Common myeloid progenitor, CD34-positive (primary cell): ENCODE measurements at regions of chr15 and their contacts with region 1.

Region 1: DNA sequence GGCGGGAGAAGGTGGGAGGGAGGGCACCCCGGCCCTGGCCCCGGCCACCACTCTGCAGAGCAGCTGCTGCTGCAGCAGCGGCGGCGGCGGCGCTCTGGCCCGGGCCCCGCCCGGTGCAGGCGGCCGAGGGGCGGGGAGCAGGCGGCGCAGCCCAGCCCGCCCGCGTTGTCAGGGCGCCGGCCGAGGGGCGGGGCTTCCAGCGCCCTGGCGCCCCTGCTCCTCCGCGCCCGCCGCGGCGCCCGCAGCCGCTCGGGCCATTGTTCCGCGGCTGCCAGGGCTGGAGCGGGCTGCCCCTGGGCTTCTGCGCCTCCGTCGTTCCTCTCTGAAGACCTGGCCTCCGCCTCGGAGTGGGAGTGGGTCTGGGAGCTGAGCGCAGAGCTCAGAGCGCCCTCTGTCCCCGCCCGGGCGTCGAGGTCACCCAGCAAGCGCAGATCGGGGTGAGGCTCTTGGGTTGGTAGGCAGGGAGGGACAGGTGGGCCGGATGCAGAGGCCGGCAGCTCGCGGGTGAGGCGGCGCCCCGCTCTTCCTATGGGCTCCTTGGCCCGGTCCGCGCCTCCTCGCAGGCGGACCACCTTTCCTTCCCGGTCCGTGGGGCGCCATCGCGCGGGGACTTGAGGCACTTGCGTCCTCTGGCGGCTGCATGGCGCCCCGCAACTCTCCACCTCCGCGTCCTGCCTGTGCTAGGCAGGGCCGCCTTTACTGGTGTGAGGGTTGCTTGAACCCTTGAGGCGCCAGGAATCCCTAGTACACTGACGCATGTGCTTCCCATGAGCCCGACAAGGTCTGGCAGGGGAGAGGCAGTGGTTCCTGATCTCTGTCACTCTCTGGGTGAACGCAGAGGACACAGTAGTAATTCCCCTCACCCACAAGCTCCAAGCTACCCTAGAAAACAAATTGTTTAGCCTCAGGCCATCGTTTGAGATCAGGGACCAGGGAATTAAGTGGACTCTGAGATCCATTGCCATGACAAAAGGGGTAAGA is at the start of gene LPCAT4:
- DNase-seq: peak; percentile 89 to 94 (median 94)
- H3K4me3 ChIP-seq: peak within 1 kb of the TSS; percentile 87 to 98 (median 91)
- H3K27ac ChIP-seq: peak within 1 kb of the TSS; percentile 51 to 87
- H3K4me1 ChIP-seq: peaks cover 8 to 27% (median 20%) of the 10 kb centered on the region in 4 experiments
- H3K27me3 ChIP-seq: no peaks in the 10 kb centered on the region

Region 2: DNA sequence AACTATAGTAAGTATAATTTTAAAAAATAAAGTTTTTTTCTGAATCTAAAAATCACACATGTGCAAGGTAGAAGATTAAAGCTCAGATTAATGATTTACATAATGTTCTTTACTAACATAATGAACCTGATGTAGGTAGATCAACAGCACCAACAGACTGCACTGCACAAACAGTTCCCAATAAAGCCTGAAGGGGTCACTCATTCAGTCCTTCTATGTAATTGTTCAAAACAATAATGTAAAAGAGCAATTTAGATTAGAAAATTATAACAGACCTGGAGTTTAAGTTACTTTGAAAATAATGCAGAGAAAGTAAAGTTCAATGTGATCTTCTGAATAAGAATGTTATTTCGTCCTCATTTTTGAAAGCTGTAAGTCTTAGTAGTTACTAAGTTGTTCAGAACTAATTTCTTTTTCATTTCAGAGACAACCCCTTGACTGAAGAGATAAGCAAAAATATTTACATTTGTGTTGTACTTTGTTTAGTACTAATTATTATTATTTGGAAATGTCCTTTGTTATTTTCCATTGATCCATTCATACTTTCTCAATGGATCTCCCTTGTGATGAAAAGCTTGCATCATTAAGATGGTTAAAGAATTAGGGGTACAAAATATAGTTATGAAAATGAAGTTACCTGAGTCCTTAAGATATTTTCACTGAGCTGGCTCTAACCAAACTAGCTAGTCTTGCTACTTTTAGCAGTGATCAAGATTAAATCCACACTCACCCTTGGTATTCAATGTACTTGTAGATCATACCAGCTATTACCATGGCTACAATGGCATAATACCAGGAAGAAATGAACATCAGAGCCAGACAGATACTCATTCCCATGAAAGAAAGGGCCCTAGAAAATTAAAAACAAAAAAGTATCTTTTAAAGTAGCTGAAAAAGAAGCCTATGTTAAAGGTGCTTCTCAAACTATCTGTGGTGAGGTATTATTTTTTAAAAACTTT is 125.7 kb before region 1 on chr15:
- CTCF ChIA-PET with region 1: interaction called, 47 read pairs
- POLR2A ChIA-PET with region 1: interaction called, 3 read pairs
- DNase-seq: peak; percentile 66 to 84 (median 75)
- H3K4me3 ChIP-seq: no peak overlapping the region
- H3K27ac ChIP-seq: peak overlapping the region in 1 of 2 experiments; percentile 37
- H3K4me1 ChIP-seq: no peaks in the 10 kb centered on the region
- H3K27me3 ChIP-seq: no peaks in the 10 kb centered on the region

Region 3: DNA sequence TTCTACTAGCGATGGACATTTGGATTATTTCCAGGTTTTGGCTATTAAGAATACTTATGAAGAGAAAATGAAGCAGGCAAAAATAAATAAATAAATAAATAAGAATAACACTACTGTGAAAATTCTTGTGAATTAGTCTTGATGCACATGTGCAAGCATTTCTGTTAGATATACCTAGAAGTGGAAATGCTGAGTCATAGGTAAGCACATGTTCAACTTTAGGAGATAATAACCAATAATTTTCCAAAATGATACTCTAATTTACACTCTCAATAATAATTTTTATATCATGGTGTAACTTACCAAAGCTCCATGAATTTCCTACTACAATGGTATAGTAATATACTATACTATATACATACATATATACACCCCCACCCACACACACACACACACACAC is 119.2 kb before region 1 on chr15:
- CTCF ChIA-PET with region 1: interaction called, 47 read pairs
- POLR2A ChIA-PET with region 1: no interaction called
- DNase-seq: peak in 2 of 3 donors; percentile 22 to 33
- H3K4me3 ChIP-seq: no peak overlapping the region
- H3K27ac ChIP-seq: no peak overlapping the region
- H3K4me1 ChIP-seq: peaks cover 0 to 6% (median 2%) of the 10 kb centered on the region in 4 experiments
- H3K27me3 ChIP-seq: no peaks in the 10 kb centered on the region

Region 4: GRCh38 chr15:34259566-34259965 is 107.8 kb before region 1 on chr15:
- CTCF ChIA-PET with region 1: interaction called, 13 read pairs
- POLR2A ChIA-PET with region 1: no interaction called
- DNase-seq: no peak
- H3K4me3 ChIP-seq: no peak overlapping the region
- H3K27ac ChIP-seq: no peak overlapping the region
- H3K4me1 ChIP-seq: no peaks in the 10 kb centered on the region
- H3K27me3 ChIP-seq: no peaks in the 10 kb centered on the region

Region 5: DNA sequence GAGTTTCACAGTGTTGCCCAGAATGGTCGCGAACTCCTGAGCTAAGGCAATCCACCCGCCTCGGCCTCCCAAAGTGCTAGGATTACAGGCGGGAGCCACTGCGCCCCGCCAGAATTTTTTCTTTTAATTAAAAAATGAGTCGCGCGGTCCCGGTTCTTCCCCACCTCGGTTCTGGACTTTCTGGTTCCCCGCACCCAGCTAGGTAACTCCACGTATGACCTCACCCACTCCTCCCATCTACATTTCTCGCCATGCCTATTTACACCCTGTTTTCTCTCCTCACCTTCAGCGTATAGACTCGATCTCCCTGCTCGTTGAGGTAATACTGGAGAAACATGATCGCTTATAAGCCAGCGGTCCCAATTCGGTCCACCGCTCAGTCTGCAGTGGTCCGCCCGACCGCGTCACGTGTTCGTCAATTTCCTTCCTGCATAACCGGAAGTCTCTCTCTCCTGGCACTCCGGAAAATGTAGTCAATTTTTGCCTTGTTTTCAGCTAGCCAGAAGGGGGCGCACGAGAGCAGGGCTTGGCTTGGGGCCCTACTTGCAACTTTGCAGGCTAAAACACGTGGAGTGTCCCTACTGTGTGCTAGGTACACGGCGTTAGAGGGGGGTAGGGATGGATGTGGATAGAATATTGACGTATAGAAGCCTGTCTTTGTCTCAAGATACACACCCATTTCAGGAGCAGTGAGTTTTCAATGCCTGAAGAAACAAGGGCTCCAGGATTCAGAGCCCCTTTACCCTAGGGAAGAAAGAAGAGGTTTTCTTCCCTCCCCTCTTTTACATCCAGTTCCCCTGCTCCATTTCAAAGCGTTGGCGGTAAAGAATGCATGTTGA is 24.4 kb before region 1 on chr15 and contains the starts of genes NOP10 and NUTM1:
- CTCF ChIA-PET with region 1: interaction called, 4 read pairs
- POLR2A ChIA-PET with region 1: interaction called, 12 read pairs
- DNase-seq: peak; percentile 95 to 97 (median 97)
- H3K4me3 ChIP-seq: peak within 1 kb of the TSS; percentile 57 to 99 (median 94)
- H3K27ac ChIP-seq: peak within 1 kb of the TSS; percentile 83 to 93
- H3K4me1 ChIP-seq: peaks cover 0 to 19% (median 12%) of the 10 kb centered on the region in 4 experiments
- H3K27me3 ChIP-seq: no peaks in the 10 kb centered on the region

Region 6: DNA sequence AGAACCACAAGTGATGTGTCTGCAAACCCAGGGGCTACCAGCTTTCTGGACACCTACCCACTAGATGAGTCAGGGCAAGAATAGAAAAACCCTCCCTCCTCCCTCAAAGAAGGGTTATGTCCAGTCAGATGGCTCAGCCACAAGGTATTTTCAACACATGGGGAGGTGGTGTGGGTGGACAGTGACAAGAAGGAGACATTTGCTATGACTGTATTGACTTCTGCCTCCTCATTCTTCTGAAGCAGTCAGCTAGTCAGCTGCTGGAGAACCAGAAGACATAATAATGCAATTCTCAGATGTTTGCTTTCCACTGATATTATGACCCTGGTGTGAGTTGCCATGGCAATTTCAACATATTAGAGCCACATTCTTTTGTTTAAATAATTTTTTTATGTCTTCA is 282.8 kb after region 1 on chr15:
- CTCF ChIA-PET with region 1: no interaction called
- POLR2A ChIA-PET with region 1: no interaction called
- DNase-seq: peak in 2 of 3 donors; percentile 10 to 27
- H3K4me3 ChIP-seq: no peak overlapping the region
- H3K27ac ChIP-seq: no peak overlapping the region
- H3K4me1 ChIP-seq: peaks cover 0 to 7% (median 0%) of the 10 kb centered on the region in 4 experiments
- H3K27me3 ChIP-seq: no peaks in the 10 kb centered on the region